Mammary epithelial cell (primary cell): ENCODE measurements at regions of chr4 and their contacts with region 1.

Region 1: GRCh38 chr4:10582059-10582686 is 102.4 kb downstream of the CLNK start:
- DNase-seq: peak; percentile 35
- H3K4me3 ChIP-seq: no peak overlapping the region
- H3K27ac ChIP-seq: no peak overlapping the region
- H3K4me1 ChIP-seq: no peaks in the 10 kb centered on the region
- H3K27me3 ChIP-seq: no peaks in the 10 kb centered on the region
- CTCF ChIP-seq: peak; percentile 89 to 99

Region 2: GRCh38 chr4:10554694-10555093 is 27.5 kb before region 1 on chr4:
- CTCF ChIA-PET with region 1: no interaction called
- dilution Hi-C with region 1: no loop called
- in situ Hi-C with region 1: no loop called
- intact Hi-C with region 1: no loop called
- DNase-seq: peak; percentile 61
- H3K4me3 ChIP-seq: no peak overlapping the region
- H3K27ac ChIP-seq: no peak overlapping the region
- H3K4me1 ChIP-seq: no peaks in the 10 kb centered on the region
- H3K27me3 ChIP-seq: no peaks in the 10 kb centered on the region
- CTCF ChIP-seq: peak; percentile 79 to 82

Region 3: GRCh38 chr4:10715696-10716095 is 133.5 kb after region 1 on chr4:
- CTCF ChIA-PET with region 1: no interaction called
- dilution Hi-C with region 1: no loop called
- in situ Hi-C with region 1: no loop called
- intact Hi-C with region 1: loop called (anchors 1 kb)
- DNase-seq: no peak
- H3K4me3 ChIP-seq: no peak overlapping the region
- H3K27ac ChIP-seq: no peak overlapping the region
- H3K4me1 ChIP-seq: no peaks in the 10 kb centered on the region
- H3K27me3 ChIP-seq: no peaks in the 10 kb centered on the region
- CTCF ChIP-seq: no peak

Region 4: GRCh38 chr4:11424000-11424399 is 841.8 kb after region 1 on chr4:
- CTCF ChIA-PET with region 1: no interaction called
- dilution Hi-C with region 1: no loop called
- in situ Hi-C with region 1: loop called in 1 of 2 experiments (anchors 5 kb)
- intact Hi-C with region 1: loop called (anchors 1 kb)
- DNase-seq: peak; percentile 47
- H3K4me3 ChIP-seq: no peak overlapping the region
- H3K27ac ChIP-seq: no peak overlapping the region
- H3K4me1 ChIP-seq: peaks cover 45% of the 10 kb centered on the region
- H3K27me3 ChIP-seq: no peaks in the 10 kb centered on the region
- CTCF ChIP-seq: peak; percentile 39 to 65

Region 5: GRCh38 chr4:11635359-11636072 is 1053.3 kb after region 1 on chr4:
- CTCF ChIA-PET with region 1: no interaction called
- dilution Hi-C with region 1: no loop called
- in situ Hi-C with region 1: no loop called
- intact Hi-C with region 1: loop called (anchors 2 kb)
- DNase-seq: peak; percentile 91
- H3K4me3 ChIP-seq: no peak overlapping the region
- H3K27ac ChIP-seq: peak overlapping the region; percentile 96
- H3K4me1 ChIP-seq: peaks cover 45% of the 10 kb centered on the region
- H3K27me3 ChIP-seq: no peaks in the 10 kb centered on the region
- CTCF ChIP-seq: no peak

Region 6: GRCh38 chr4:11748164-11748872 is 1166.1 kb after region 1 on chr4:
- CTCF ChIA-PET with region 1: no interaction called
- dilution Hi-C with region 1: no loop called
- in situ Hi-C with region 1: loop called (anchors 25 kb)
- intact Hi-C with region 1: no loop called
- DNase-seq: peak; percentile 82
- H3K4me3 ChIP-seq: peak overlapping the region in 2 of 3 experiments; percentile 5 to 18
- H3K27ac ChIP-seq: peak overlapping the region; percentile 53
- H3K4me1 ChIP-seq: peaks cover 16% of the 10 kb centered on the region
- H3K27me3 ChIP-seq: no peaks in the 10 kb centered on the region
- CTCF ChIP-seq: no peak

Region 7: DNA sequence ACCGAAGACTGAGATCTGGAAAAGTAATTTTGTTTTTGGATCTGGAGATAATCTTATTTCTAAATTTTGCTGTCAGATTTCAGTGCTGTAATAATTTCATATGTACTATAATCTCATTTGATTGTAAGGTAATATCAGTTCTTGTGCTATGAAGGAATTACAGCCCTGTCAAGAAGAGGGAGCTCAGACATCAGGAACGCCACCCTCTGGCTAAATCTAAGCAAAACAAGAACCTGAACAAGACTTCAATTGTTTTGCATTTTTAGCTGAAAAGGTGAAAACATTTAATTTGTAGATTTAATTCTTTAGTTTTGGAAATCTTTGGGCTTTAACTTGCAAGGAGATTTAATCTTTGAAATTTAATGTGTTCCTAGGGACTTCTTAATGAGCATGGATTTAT is 1371.9 kb after region 1 on chr4:
- CTCF ChIA-PET with region 1: no interaction called
- dilution Hi-C with region 1: no loop called
- in situ Hi-C with region 1: no loop called
- intact Hi-C with region 1: loop called (anchors 1 kb)
- DNase-seq: peak; percentile 8
- H3K4me3 ChIP-seq: no peak overlapping the region
- H3K27ac ChIP-seq: no peak overlapping the region
- H3K4me1 ChIP-seq: no peaks in the 10 kb centered on the region
- H3K27me3 ChIP-seq: no peaks in the 10 kb centered on the region
- CTCF ChIP-seq: peak; percentile 37 to 60